Gastrocnemius medialis (tissue), 4 donors: ENCODE measurements at regions of chr22 and their contacts with region 1.

Region 1: GRCh38 chr22:50627642-50628542 is at the start of gene ARSA:
- DNase-seq: peak; percentile 69 to 80
- ATAC-seq: peak; percentile 92 to 93
- H3K4me3 ChIP-seq: peak within 1 kb of the TSS; percentile 84 to 91 (median 88)
- H3K27ac ChIP-seq: peak within 1 kb of the TSS; percentile 82 to 87 (median 84)
- H3K4me1 ChIP-seq: peaks cover 9 to 18% of the 10 kb centered on the region in 2 donors
- H3K27me3 ChIP-seq: no peaks in the 10 kb centered on the region
- CTCF ChIP-seq: peak in 3 of 5 experiments; percentile 15 to 44 (median 29)
- POLR2A ChIP-seq: peak; percentile 28 to 31
- total RNA-seq, gene ARSA: 8.8 to 17.8 (median 10.2) TPM

Region 2: GRCh38 chr22:50525390-50526068 is 102.4 kb before region 1 on chr22 and contains the start of gene SCO2:
- in situ Hi-C with region 1: no loop called
- intact Hi-C with region 1: loop called (anchors 5 kb)
- DNase-seq: peak; percentile 87 to 91
- ATAC-seq: peak; percentile 87
- H3K4me3 ChIP-seq: peak within 1 kb of the TSS; percentile 68 to 91 (median 83)
- H3K27ac ChIP-seq: peak within 1 kb of the TSS; percentile 84 to 92 (median 88)
- H3K4me1 ChIP-seq: peaks cover 13 to 20% of the 10 kb centered on the region in 2 donors
- H3K27me3 ChIP-seq: peaks cover 10 to 20% (median 18%) of the 10 kb centered on the region in 3 donors
- CTCF ChIP-seq: peak; percentile 36 to 57 (median 45)
- POLR2A ChIP-seq: peak; percentile 68 to 72
- total RNA-seq, gene SCO2: 1.0 to 2.3 TPM in 2 of 4 donors, not detected in the others

Region 3: GRCh38 chr22:50569916-50570535 is 57.9 kb before region 1 on chr22:
- in situ Hi-C with region 1: no loop called
- intact Hi-C with region 1: no loop called
- DNase-seq: no peak
- ATAC-seq: no peak
- H3K4me3 ChIP-seq: no peak overlapping the region
- H3K27ac ChIP-seq: peak overlapping the region in 1 of 4 donors; percentile 42
- H3K4me1 ChIP-seq: peaks cover 0 to 5% of the 10 kb centered on the region in 2 donors
- H3K27me3 ChIP-seq: no peaks in the 10 kb centered on the region
- CTCF ChIP-seq: no peak
- POLR2A ChIP-seq: no peak

Region 4: GRCh38 chr22:50582562-50583293 is 45.2 kb before region 1 on chr22 and contains the start of gene CHKB:
- in situ Hi-C with region 1: no loop called
- intact Hi-C with region 1: loop called (anchors 1 kb)
- DNase-seq: peak; percentile 97 to 98
- ATAC-seq: peak; percentile 79 to 89
- H3K4me3 ChIP-seq: peak within 1 kb of the TSS; percentile 69 to 96 (median 74)
- H3K27ac ChIP-seq: peak within 1 kb of the TSS; percentile 89 to 98 (median 96)
- H3K4me1 ChIP-seq: peaks cover 27 to 39% of the 10 kb centered on the region in 2 donors
- H3K27me3 ChIP-seq: no peaks in the 10 kb centered on the region
- CTCF ChIP-seq: no peak
- POLR2A ChIP-seq: peak; percentile 96 to 98
- total RNA-seq, gene CHKB: 10.8 to 39.7 (median 24.4) TPM